Left cardiac atrium (tissue), 4 donors: ENCODE measurements at regions of chr7 and their contacts with region 1.

Region 1: DNA sequence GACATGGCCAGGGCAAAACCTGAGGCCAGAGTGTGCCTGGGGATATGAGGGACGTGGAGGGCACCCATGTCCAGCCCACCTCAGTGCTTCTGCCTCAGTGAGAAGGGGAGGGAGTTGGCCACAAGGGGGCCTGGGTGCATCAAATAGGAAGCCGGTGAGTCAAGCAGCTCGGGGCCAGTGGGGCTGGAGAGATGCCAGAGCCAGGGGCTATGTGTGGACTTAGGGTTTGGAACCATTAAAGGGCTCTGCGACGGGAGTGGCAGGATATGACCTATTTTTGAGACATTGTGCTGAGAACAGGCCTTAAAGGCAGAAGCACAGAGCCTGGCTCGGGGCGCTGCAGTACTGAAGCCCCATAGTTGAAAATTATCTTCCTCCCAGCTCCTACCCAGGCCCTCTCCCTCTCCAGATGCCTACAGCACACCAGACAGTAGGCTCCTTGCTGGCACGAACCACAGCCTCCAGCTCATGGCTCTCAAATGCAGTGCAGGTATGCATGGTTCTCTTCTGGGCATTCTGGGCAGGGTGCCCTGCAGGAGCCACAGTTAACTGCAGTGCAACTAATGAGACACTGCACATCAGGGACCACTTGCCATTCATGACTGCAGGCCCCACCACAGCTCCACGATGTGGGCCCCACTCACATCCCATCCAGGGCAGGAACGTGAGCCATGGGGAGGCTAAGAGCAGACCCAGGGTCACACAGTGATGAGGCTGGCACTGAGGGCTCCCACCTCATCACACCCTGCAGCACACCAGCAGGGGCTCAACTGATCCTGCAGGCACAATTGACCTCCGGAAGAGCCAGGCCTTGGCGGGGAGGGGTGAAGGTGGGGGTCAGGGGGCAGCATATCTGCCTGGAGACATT is 7.2 kb upstream of the PGAM2 start:
- DNase-seq: peak; percentile 91
- ATAC-seq: peak; percentile 60 to 63

Region 2: DNA sequence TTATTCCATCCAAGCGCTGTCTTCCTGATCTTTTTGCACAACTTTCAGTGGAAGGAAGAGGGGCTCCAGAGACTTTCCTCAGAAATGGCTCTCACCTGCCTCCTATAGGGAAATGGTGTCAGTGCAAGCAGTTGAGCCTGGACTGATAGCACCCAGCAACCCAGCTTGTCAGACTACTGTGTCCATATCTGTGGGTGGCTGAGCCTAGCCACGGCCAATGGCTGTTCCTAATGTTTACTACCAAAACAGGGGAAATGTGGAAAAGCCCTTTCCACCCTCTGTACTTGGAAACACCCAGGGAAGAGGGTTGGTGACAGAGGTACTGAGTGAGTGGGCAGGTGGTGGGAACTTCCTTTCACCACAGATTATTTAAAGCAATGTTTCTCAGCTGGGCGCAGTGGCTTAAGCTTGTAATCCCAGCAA is 123.9 kb after region 1 on chr7:
- intact Hi-C with region 1: loop called in 1 of 2 experiments (anchors 1 kb)
- DNase-seq: no peak
- ATAC-seq: peak; percentile 54 to 66

Region 3: GRCh38 chr7:44257618-44258422 is 185.2 kb after region 1 on chr7:
- intact Hi-C with region 1: no loop called
- DNase-seq: peak; percentile 86
- ATAC-seq: peak; percentile 87 to 93